GM12878 (cell line): ENCODE measurements at regions of chr5 and their contacts with region 1.

Region 1: DNA sequence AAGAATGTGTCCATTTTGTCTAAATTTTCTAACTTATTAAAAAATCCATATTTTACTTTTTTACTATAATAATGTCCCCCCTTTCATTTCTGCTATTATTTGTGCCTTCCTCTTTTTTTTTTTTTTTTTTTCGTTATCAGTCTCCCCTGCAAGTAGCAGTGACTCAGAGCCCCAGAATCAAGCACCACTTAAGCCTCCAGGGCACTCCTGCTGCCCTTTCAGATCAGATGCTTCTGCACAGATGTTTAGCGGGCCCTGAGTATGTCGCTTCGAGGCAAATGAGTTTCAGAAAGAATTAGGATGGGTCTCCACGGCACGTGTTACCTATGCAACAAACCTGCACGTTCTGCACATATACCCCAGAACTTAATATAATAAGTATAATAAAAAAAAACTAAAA is 11.7 kb downstream of the MED7 start:
- DNase-seq: no peak
- ATAC-seq: peak; percentile 82
- H3K4me3 ChIP-seq: no peak overlapping the region
- H3K27ac ChIP-seq: no peak overlapping the region
- H3K4me1 ChIP-seq: peaks cover 5% of the 10 kb centered on the region; the same call in 1 of the 2 replicates
- H3K27me3 ChIP-seq: no peaks in the 10 kb centered on the region
- CTCF ChIP-seq: no peak
- EP300 ChIP-seq: no peak
- POLR2A ChIP-seq: no peak
- RAD21 ChIP-seq: peak; percentile 11; the same call in 1 of the 2 replicates

Region 2: DNA sequence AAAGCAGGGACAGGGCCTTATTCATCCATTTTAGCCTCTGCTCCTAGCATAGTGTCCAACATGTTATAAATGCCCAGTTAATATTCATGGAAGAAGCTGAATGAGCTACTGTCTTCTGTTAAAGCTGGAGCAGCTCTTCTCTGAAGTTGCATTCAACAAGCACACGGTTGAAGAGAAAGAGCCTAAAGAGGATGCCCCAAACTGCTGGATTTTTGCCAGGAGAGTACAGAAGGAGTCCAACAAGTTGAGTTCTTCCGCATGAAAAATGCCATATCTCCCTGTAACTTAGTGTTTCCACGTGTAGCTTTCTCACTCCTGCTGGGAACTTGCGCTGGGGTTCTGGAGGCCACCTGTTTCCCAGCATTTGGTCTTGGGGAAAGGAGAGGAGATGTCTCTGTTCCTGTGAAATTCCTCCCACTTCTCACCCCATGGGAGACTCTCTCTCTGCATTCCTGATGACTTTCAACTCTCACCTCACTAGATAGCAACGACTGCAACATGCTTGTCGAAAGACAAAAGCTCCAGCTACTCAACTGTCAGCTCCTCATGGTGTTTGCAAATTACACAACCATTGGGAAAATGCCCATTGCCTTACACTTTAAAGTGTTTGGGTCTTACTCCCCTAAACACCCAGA is 1994.6 kb before region 1 on chr5:
- CTCF ChIA-PET with region 1: interaction called, 6 read pairs
- POLR2A ChIA-PET with region 1: no interaction called
- RAD21 ChIA-PET with region 1: interaction called, 3 read pairs
- SMC1A ChIA-PET with region 1: no interaction called
- in situ Hi-C with region 1: no loop called
- intact Hi-C with region 1: loop called (anchors 5 kb)
- DNase-seq: no peak
- ATAC-seq: no peak
- H3K4me3 ChIP-seq: no peak overlapping the region
- H3K27ac ChIP-seq: no peak overlapping the region
- H3K4me1 ChIP-seq: no peaks in the 10 kb centered on the region
- H3K27me3 ChIP-seq: no peaks in the 10 kb centered on the region
- CTCF ChIP-seq: no peak
- EP300 ChIP-seq: no peak
- POLR2A ChIP-seq: no peak
- RAD21 ChIP-seq: no peak

Region 3: DNA sequence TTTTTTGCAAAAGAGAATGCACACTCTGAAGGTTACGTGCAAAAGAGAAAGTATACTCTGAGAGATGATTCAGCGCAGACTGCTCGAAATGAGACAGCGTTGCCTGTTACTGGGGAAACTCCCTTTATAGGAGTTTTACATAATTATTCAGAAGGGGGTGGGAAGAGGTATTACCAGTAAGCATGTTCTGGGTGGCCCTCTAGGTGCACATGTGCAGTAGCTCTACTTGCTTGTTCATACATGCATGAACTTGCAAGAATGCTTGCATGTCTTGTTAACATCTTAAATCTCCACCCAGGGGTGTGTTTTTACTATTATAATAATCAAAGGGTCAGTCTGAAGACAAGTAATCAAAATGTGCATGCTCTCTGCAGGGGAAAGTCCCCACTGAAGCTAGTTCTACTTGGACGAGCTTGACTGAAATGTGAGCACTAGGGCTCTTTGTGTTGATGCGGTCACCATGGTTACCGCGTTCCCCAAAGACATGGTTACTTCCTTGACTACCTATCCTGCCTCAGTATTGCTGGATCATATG is 728.5 kb before region 1 on chr5:
- CTCF ChIA-PET with region 1: no interaction called
- POLR2A ChIA-PET with region 1: no interaction called
- RAD21 ChIA-PET with region 1: no interaction called
- SMC1A ChIA-PET with region 1: no interaction called
- in situ Hi-C with region 1: no loop called
- intact Hi-C with region 1: loop called (anchors 10 kb)
- DNase-seq: peak; percentile 87
- ATAC-seq: peak; percentile 96
- H3K4me3 ChIP-seq: peak overlapping the region; percentile 24; the same call in 1 of the 2 replicates
- H3K27ac ChIP-seq: no peak overlapping the region; the same call in 1 of the 2 replicates
- H3K4me1 ChIP-seq: peaks cover 15% of the 10 kb centered on the region
- H3K27me3 ChIP-seq: no peaks in the 10 kb centered on the region
- CTCF ChIP-seq: no peak
- EP300 ChIP-seq: peak; percentile 26 to 56; a peak in 1 of 4 replicates
- POLR2A ChIP-seq: no peak
- RAD21 ChIP-seq: 0 out of 2 replicates have a peak, but pooled peaks have one; percentile 27

Region 4: GRCh38 chr5:156595132-156595787 is 535.7 kb before region 1 on chr5:
- CTCF ChIA-PET with region 1: no interaction called
- POLR2A ChIA-PET with region 1: no interaction called
- RAD21 ChIA-PET with region 1: no interaction called
- SMC1A ChIA-PET with region 1: no interaction called
- in situ Hi-C with region 1: no loop called
- intact Hi-C with region 1: no loop called
- DNase-seq: no peak
- ATAC-seq: no peak
- H3K4me3 ChIP-seq: no peak overlapping the region
- H3K27ac ChIP-seq: no peak overlapping the region
- H3K4me1 ChIP-seq: no peaks in the 10 kb centered on the region
- H3K27me3 ChIP-seq: no peaks in the 10 kb centered on the region
- CTCF ChIP-seq: no peak
- EP300 ChIP-seq: no peak
- POLR2A ChIP-seq: no peak
- RAD21 ChIP-seq: no peak

Region 5: GRCh38 chr5:156815988-156816599 is 314.8 kb before region 1 on chr5:
- CTCF ChIA-PET with region 1: interaction called, 11 read pairs
- POLR2A ChIA-PET with region 1: no interaction called
- RAD21 ChIA-PET with region 1: interaction called, 4 read pairs
- SMC1A ChIA-PET with region 1: interaction called, 8 read pairs
- in situ Hi-C with region 1: no loop called
- intact Hi-C with region 1: no loop called
- DNase-seq: no peak
- ATAC-seq: peak; percentile 79
- H3K4me3 ChIP-seq: no peak overlapping the region
- H3K27ac ChIP-seq: no peak overlapping the region
- H3K4me1 ChIP-seq: peaks cover 7% of the 10 kb centered on the region; the same call in 1 of the 2 replicates
- H3K27me3 ChIP-seq: no peaks in the 10 kb centered on the region
- CTCF ChIP-seq: peak; percentile 50 to 71 (median 53)
- EP300 ChIP-seq: no peak
- POLR2A ChIP-seq: no peak
- RAD21 ChIP-seq: peak; percentile 85

Region 6: GRCh38 chr5:156893517-156893916 is 237.4 kb before region 1 on chr5:
- CTCF ChIA-PET with region 1: interaction called, 9 read pairs
- POLR2A ChIA-PET with region 1: interaction called, 5 read pairs
- RAD21 ChIA-PET with region 1: interaction called, 10 read pairs
- SMC1A ChIA-PET with region 1: interaction called, 15 read pairs
- in situ Hi-C with region 1: no loop called
- intact Hi-C with region 1: no loop called
- DNase-seq: peak; percentile 52
- ATAC-seq: peak; percentile 82
- H3K4me3 ChIP-seq: no peak overlapping the region
- H3K27ac ChIP-seq: peak overlapping the region; percentile 47; the same call in 1 of the 2 replicates
- H3K4me1 ChIP-seq: peaks cover 23% of the 10 kb centered on the region
- H3K27me3 ChIP-seq: no peaks in the 10 kb centered on the region
- CTCF ChIP-seq: no peak
- EP300 ChIP-seq: peak in 1 of 2 experiments; percentile 51; a peak in 1 of 4 replicates
- POLR2A ChIP-seq: no peak
- RAD21 ChIP-seq: no peak

Region 7: GRCh38 chr5:157026789-157027424 is 104.0 kb before region 1 on chr5:
- CTCF ChIA-PET with region 1: interaction called, 12 read pairs
- POLR2A ChIA-PET with region 1: no interaction called
- RAD21 ChIA-PET with region 1: interaction called, 5 read pairs
- SMC1A ChIA-PET with region 1: interaction called, 14 read pairs
- in situ Hi-C with region 1: no loop called
- intact Hi-C with region 1: loop called (anchors 1 kb)
- DNase-seq: no peak
- ATAC-seq: peak; percentile 48
- H3K4me3 ChIP-seq: no peak overlapping the region
- H3K27ac ChIP-seq: no peak overlapping the region
- H3K4me1 ChIP-seq: peaks cover 6% of the 10 kb centered on the region
- H3K27me3 ChIP-seq: no peaks in the 10 kb centered on the region
- CTCF ChIP-seq: peak; percentile 67 to 75 (median 69)
- EP300 ChIP-seq: no peak
- POLR2A ChIP-seq: no peak
- RAD21 ChIP-seq: peak; percentile 70

Region 8: DNA sequence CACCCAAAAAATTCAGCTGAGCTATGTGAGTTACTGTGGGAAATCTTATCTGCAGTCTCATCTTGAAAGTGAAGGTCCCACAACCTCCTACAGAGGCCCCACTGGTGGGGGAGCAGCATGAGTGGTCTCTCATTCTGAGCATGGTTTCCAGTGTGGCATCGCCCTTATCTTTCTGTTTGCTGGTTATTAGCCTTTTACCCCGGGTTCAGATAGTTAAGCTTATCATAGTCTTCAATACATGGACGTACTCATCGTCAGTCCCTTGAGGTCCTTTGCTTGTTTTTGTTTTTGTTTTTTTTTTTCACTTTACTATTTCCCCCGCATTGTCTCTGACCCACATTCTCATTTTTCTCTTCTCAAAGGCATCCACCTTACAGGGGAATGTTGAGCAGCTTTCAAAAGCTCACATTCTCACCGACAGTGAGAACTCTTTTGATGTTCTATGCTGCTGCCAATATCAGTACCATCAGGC is 14.4 kb before region 1 on chr5:
- CTCF ChIA-PET with region 1: interaction called, 51 read pairs
- POLR2A ChIA-PET with region 1: interaction called, 3 read pairs
- RAD21 ChIA-PET with region 1: interaction called, 21 read pairs
- SMC1A ChIA-PET with region 1: interaction called, 54 read pairs
- in situ Hi-C with region 1: no loop called
- intact Hi-C with region 1: no loop called
- DNase-seq: peak; percentile 63
- ATAC-seq: peak; percentile 88
- H3K4me3 ChIP-seq: peak overlapping the region; percentile 18; the same call in 1 of the 2 replicates
- H3K27ac ChIP-seq: peak overlapping the region; percentile 90
- H3K4me1 ChIP-seq: peaks cover 22% of the 10 kb centered on the region
- H3K27me3 ChIP-seq: no peaks in the 10 kb centered on the region
- CTCF ChIP-seq: no peak
- EP300 ChIP-seq: no peak
- POLR2A ChIP-seq: no peak
- RAD21 ChIP-seq: 0 out of 2 replicates have a peak, but pooled peaks have one; percentile 16

Region 9: DNA sequence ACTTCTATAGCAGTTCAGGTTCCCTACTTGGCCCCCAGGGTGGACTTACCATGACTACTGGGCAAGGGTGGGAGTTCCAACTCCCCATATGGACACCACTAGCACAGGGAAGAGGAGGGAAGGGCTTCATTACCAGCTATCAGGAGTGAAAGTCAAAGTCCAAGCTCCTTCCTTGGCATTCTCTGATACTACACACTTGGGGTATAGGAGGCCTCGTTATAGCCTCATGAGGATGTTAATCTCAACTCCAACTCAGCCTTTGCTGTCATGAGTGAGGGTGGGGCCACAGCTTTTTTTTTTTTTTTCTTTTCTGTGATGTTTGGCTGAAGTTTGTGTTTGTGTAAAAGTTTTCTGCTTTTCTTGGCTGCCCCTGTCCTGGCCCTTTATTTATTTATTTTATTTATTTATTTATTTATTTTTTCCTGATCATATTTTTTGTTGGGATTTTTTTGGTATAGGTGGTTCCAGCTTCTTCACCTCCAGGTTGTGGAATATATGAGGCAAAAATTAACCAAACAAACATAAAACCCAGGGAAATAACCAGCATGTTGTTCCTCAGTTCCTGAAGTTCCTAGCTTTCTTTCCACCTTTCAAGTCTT is 26.5 kb after region 1 on chr5:
- CTCF ChIA-PET with region 1: no interaction called
- POLR2A ChIA-PET with region 1: no interaction called
- RAD21 ChIA-PET with region 1: no interaction called
- SMC1A ChIA-PET with region 1: no interaction called
- in situ Hi-C with region 1: no loop called
- intact Hi-C with region 1: no loop called
- DNase-seq: no peak
- ATAC-seq: no peak
- H3K4me3 ChIP-seq: no peak overlapping the region
- H3K27ac ChIP-seq: no peak overlapping the region
- H3K4me1 ChIP-seq: no peaks in the 10 kb centered on the region
- H3K27me3 ChIP-seq: no peaks in the 10 kb centered on the region
- CTCF ChIP-seq: no peak
- EP300 ChIP-seq: no peak
- POLR2A ChIP-seq: no peak
- RAD21 ChIP-seq: no peak